ENCODE measurements at regions of chr5 and their contacts with region 1.

Region 1: GRCh38 chr5:67209142-67209771 is 12.7 kb upstream of the CD180 start:
- DNase-seq: no peak
- ATAC-seq: peak; percentile 43
- H3K4me3 Mint-ChIP-seq: no peak overlapping the region
- H3K27ac Mint-ChIP-seq: peak overlapping the region; percentile 85
- H3K4me1 Mint-ChIP-seq: peaks cover 69% of the 10 kb centered on the region
- H3K27me3 Mint-ChIP-seq: no peaks in the 10 kb centered on the region
- CTCF ChIP-seq: no peak

Region 2: GRCh38 chr5:66144074-66144833 is 1065.0 kb before region 1 on chr5 and contains the start of gene SREK1:
- CTCF ChIA-PET with region 1: no interaction called
- POLR2A ChIA-PET with region 1: no interaction called
- intact Hi-C with region 1: loop called (anchors 10 kb)
- DNase-seq: peak; percentile 84
- ATAC-seq: peak; percentile 86
- H3K4me3 Mint-ChIP-seq: peak within 1 kb of the TSS; percentile 99
- H3K27ac Mint-ChIP-seq: peak within 1 kb of the TSS; percentile 100
- H3K4me1 Mint-ChIP-seq: peaks cover 33% of the 10 kb centered on the region
- H3K27me3 Mint-ChIP-seq: no peaks in the 10 kb centered on the region
- CTCF ChIP-seq: no peak
- total RNA-seq, gene SREK1: 78.2 and 104 TPM in 2 replicates

Region 3: GRCh38 chr5:66779528-66779927 is 429.7 kb before region 1 on chr5:
- CTCF ChIA-PET with region 1: no interaction called
- POLR2A ChIA-PET with region 1: no interaction called
- intact Hi-C with region 1: no loop called
- DNase-seq: no peak
- ATAC-seq: no peak
- H3K4me3 Mint-ChIP-seq: no peak overlapping the region
- H3K27ac Mint-ChIP-seq: no peak overlapping the region
- H3K4me1 Mint-ChIP-seq: no peaks in the 10 kb centered on the region
- H3K27me3 Mint-ChIP-seq: peaks cover 3% of the 10 kb centered on the region
- CTCF ChIP-seq: no peak

Region 4: GRCh38 chr5:66840511-66841013 is 368.7 kb before region 1 on chr5:
- CTCF ChIA-PET with region 1: no interaction called
- POLR2A ChIA-PET with region 1: no interaction called
- intact Hi-C with region 1: loop called (anchors 5 kb)
- DNase-seq: no peak
- ATAC-seq: peak; percentile 92
- H3K4me3 Mint-ChIP-seq: no peak overlapping the region
- H3K27ac Mint-ChIP-seq: no peak overlapping the region
- H3K4me1 Mint-ChIP-seq: peaks cover 16% of the 10 kb centered on the region
- H3K27me3 Mint-ChIP-seq: peaks cover 8% of the 10 kb centered on the region
- CTCF ChIP-seq: no peak

Region 5: DNA sequence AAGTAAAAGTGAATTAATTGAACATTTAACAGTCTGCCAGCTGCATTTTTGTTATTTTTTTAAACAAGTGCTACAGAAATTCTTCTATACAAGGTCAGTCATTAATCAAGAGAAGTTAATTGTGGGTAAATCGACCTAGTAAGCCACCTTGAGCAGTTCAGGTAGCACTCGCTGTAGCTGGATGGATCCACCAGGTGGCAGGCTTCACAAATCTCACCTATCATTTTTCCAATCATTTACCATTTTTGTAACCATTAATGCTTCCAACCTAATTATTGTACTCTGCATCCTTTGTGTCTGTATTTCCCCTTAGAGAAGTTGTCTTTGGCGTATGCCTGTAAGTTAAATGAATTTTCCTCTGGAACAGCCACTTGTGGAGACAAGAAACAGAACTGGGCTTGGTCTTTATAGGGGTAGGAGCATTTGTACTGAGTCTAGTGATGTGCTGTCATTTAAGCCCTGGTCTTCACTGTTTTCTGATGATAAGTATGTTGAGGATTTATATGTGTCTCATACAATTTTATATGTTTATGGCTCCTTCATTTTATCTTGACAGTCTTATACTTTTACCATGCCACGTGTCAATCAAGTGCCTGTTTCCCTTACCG is 52.2 kb before region 1 on chr5:
- CTCF ChIA-PET with region 1: interaction called, 100 read pairs
- POLR2A ChIA-PET with region 1: interaction called, 214 read pairs
- intact Hi-C with region 1: loop called (anchors 1 kb)
- DNase-seq: peak; percentile 19
- ATAC-seq: peak; percentile 73
- H3K4me3 Mint-ChIP-seq: no peak overlapping the region
- H3K27ac Mint-ChIP-seq: no peak overlapping the region
- H3K4me1 Mint-ChIP-seq: peaks cover 11% of the 10 kb centered on the region
- H3K27me3 Mint-ChIP-seq: no peaks in the 10 kb centered on the region
- CTCF ChIP-seq: peak; percentile 80

Region 6: GRCh38 chr5:67196537-67197059 is 12.7 kb before region 1 on chr5 and contains the start of gene CD180:
- CTCF ChIA-PET with region 1: interaction called, 36 read pairs
- POLR2A ChIA-PET with region 1: interaction called, 228 read pairs
- intact Hi-C with region 1: loop called (anchors 1 kb)
- DNase-seq: no peak
- ATAC-seq: peak; percentile 32
- H3K4me3 Mint-ChIP-seq: peak within 1 kb of the TSS; percentile 91
- H3K27ac Mint-ChIP-seq: peak within 1 kb of the TSS; percentile 98
- H3K4me1 Mint-ChIP-seq: peaks cover 97% of the 10 kb centered on the region
- H3K27me3 Mint-ChIP-seq: no peaks in the 10 kb centered on the region
- CTCF ChIP-seq: no peak
- total RNA-seq, gene CD180: 32.6 and 35.7 TPM in 2 replicates

Measured in activated B cell treated with CpG ODN at 0.5 μM for 24 hours (primary cell).